ENCODE measurements at regions of chr11 and their contacts with region 1.

Region 1: DNA sequence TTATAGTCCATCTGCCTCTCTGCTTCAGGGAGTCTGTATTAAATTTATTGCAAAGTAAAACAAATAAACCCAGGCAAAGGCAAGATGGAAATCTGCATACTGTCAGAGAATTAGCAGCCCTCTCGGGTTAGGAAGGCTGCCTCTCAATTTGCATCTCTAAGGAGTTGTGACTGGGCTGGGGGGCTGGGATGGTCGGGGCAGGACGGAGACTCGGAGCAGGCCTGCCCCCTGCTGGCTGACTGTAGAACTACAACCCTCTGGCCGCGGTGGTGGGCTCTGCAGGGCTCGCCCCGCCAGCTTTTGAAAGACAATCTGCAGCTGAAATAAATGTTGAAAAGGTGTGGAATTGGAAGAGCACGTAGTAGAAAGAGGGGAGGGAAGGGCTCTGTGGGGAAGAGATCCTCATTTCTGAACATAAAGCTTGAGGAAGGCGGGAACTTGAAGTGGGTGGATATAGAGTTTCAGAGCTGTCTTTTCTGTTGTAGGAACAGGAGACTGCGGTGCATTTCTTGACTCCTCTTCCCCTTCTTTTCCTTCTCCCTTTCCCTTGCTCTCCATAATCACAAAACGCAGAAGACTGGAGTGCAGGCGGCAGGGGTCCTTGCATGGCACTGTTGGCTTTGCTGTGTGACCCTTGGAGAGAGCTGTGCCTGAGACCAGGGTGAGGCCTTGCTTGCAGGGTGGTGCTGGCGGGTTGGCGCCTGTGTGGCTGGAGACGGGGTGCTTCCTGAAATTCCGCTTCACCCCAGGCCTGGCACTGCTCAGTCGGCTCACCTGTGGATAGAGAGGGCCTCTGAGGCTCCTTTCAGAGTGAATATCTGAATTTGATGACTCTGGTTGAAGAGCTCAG is 22.6 kb upstream of the PKNOX2 start:
- DNase-seq: peak; percentile 51
- H3K4me3 ChIP-seq: no peak overlapping the region
- H3K27ac ChIP-seq: no peak overlapping the region
- H3K4me1 ChIP-seq: no peaks in the 10 kb centered on the region
- H3K27me3 ChIP-seq: no peaks in the 10 kb centered on the region; the same call in 1 of the 2 replicates

Region 2: GRCh38 chr11:124970925-124971324 is 171.0 kb before region 1 on chr11:
- in situ Hi-C with region 1: loop called (anchors 10 kb)
- DNase-seq: peak; percentile 47
- H3K4me3 ChIP-seq: no peak overlapping the region
- H3K27ac ChIP-seq: no peak overlapping the region
- H3K4me1 ChIP-seq: no peaks in the 10 kb centered on the region
- H3K27me3 ChIP-seq: no peaks in the 10 kb centered on the region